ENCODE measurements at regions of chr5 and their contacts with region 1.

Region 1: DNA sequence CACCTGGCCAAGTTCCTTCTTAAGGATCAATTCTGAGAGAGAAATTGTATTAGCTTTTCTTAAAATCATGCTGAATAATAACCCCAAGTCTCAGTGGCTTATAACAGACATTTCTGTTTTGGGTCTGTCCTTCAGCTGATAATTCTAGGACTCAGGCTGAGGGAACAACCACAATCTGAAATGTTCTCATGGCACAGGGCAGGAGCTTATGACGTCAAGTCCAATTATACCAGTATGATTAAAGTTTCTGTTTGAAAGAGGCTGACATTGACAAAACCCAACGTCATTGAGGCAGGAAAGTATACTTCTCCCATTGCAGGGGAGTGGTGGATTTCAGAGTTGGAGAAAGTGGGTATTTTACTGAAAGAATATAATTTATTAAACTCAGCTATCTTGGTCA is 21.8 kb downstream of the CENPH start:
- DNase-seq: no peak
- ATAC-seq: no peak
- H3K4me3 ChIP-seq: no peak overlapping the region
- H3K4me3 Mint-ChIP-seq: no peak overlapping the region
- H3K27ac ChIP-seq: no peak overlapping the region
- H3K27ac Mint-ChIP-seq: no peak overlapping the region
- H3K4me1 ChIP-seq: no peaks in the 10 kb centered on the region
- H3K4me1 Mint-ChIP-seq: peaks cover 0 to 3% (median 3%) of the 10 kb centered on the region in 3 donors
- H3K27me3 ChIP-seq: no peaks in the 10 kb centered on the region
- H3K27me3 Mint-ChIP-seq: no peaks in the 10 kb centered on the region

Region 2: GRCh38 chr5:69084903-69085302 is 126.3 kb before region 1 on chr5:
- CTCF ChIA-PET with region 1: no interaction called
- POLR2A ChIA-PET with region 1: interaction called in 1 of 2 experiments, 11 read pairs
- DNase-seq: no peak
- ATAC-seq: no peak
- H3K4me3 ChIP-seq: no peak overlapping the region
- H3K4me3 Mint-ChIP-seq: no peak overlapping the region
- H3K27ac ChIP-seq: no peak overlapping the region
- H3K27ac Mint-ChIP-seq: no peak overlapping the region
- H3K4me1 ChIP-seq: no peaks in the 10 kb centered on the region
- H3K4me1 Mint-ChIP-seq: peaks cover 0 to 5% (median 3%) of the 10 kb centered on the region in 3 donors
- H3K27me3 ChIP-seq: no peaks in the 10 kb centered on the region
- H3K27me3 Mint-ChIP-seq: peaks cover 0 to 1% of the 10 kb centered on the region in 2 donors

Measured in T-cell (primary cell).